ENCODE measurements at regions of chr1 and their contacts with region 1.

Region 1: DNA sequence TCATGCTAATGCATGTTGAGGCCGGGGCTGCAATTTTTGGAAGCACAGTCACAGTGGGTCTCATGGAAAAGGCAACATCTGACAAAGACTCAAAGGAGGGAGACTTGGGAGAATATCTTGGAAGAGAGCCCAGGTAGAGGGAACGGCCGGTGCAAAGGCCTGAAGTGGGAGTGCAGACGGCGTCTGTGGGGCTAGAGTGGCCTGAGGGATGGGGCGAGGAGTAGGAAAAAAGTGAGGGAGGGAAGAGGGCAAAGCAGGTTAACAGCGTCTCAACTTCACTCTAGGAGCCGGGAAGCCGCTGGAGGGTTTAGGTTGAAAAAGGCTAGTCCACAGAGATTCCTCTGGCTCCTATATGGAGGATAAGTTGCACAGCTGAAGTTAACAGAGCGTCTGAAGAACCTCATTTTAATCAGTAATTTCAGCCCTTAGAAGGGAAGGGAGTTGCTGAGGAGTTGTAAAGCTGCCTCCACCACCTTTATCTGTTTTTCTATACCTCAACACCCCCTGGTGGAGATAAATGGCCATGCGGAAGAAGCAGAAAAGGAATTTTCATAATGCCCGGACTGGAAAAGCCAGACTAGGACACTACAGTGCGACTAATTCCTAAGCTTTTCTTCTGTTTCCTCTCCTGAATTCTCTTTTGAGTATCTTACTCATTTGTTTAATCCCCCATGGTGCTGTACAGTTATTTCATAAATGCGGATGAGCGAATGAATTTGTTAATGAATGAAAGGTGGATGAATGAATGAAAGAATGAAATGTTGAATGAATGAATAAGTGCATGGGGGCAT is 78.7 kb upstream of the ZNF281 start:
- DNase-seq: peak; percentile 72
- H3K4me3 ChIP-seq: no peak overlapping the region
- H3K27ac ChIP-seq: no peak overlapping the region
- H3K4me1 ChIP-seq: peaks cover 10% of the 10 kb centered on the region
- H3K27me3 ChIP-seq: peaks cover 0 to 2% of the 10 kb centered on the region in 2 experiments
- CTCF ChIP-seq: peak; percentile 71 to 73
- POLR2A ChIP-seq: no peak

Region 2: GRCh38 chr1:199639453-199639852 is 849.1 kb before region 1 on chr1:
- CTCF ChIA-PET with region 1: no interaction called
- POLR2A ChIA-PET with region 1: no interaction called
- dilution Hi-C with region 1: no loop called
- intact Hi-C with region 1: no loop called
- DNase-seq: no peak
- H3K4me3 ChIP-seq: no peak overlapping the region
- H3K27ac ChIP-seq: no peak overlapping the region
- H3K4me1 ChIP-seq: no peaks in the 10 kb centered on the region
- H3K27me3 ChIP-seq: peaks cover 0 to 2% of the 10 kb centered on the region in 2 experiments
- CTCF ChIP-seq: no peak
- POLR2A ChIP-seq: no peak

Region 3: GRCh38 chr1:200139661-200140250 is 348.8 kb before region 1 on chr1:
- CTCF ChIA-PET with region 1: interaction called, 6 read pairs
- POLR2A ChIA-PET with region 1: no interaction called
- dilution Hi-C with region 1: no loop called
- intact Hi-C with region 1: loop called (anchors 1 kb)
- DNase-seq: peak; percentile 67
- H3K4me3 ChIP-seq: no peak overlapping the region
- H3K27ac ChIP-seq: no peak overlapping the region
- H3K4me1 ChIP-seq: no peaks in the 10 kb centered on the region
- H3K27me3 ChIP-seq: no peaks in the 10 kb centered on the region
- CTCF ChIP-seq: peak; percentile 64 to 65
- POLR2A ChIP-seq: no peak

Region 4: GRCh38 chr1:200207711-200208126 is 280.9 kb before region 1 on chr1:
- CTCF ChIA-PET with region 1: no interaction called
- POLR2A ChIA-PET with region 1: no interaction called
- dilution Hi-C with region 1: no loop called
- intact Hi-C with region 1: no loop called
- DNase-seq: no peak
- H3K4me3 ChIP-seq: no peak overlapping the region
- H3K27ac ChIP-seq: no peak overlapping the region
- H3K4me1 ChIP-seq: no peaks in the 10 kb centered on the region
- H3K27me3 ChIP-seq: no peaks in the 10 kb centered on the region
- CTCF ChIP-seq: no peak
- POLR2A ChIP-seq: no peak

Region 5: DNA sequence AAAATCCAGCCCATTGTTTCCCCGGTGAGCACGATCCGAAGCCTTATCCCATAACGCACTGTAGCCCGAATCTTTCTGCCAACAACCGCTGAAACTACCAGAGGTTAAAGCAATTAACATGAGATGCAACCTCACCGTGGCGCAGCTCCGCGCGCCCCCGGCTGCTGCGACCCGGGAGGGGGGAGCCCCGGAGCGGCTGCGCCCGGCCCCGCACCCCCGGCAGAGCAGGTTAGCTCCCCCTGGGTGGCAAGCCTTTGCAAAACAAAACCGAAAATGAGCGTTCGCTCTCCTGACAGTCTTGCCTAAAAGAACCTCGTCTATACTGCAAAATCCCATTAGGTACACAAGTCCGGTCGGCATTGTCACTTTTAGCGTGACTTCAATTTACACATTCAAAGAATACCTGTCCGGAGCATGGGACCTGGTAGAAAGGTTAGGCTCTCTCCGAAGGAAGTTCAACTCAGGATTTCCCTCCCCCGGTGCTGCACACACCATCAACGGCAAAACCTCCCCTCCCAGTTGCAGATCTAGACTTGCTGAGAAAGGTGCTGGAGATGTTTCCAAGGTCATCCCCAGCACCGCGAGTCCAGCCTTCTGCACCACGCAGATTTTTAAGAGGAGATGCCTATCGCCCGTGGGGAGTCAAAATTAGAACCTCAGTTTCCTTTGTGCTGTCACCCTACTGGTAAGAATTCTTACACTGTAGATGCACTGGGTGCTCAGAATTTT is 186.2 kb before region 1 on chr1:
- CTCF ChIA-PET with region 1: interaction called, 17 read pairs
- POLR2A ChIA-PET with region 1: no interaction called
- dilution Hi-C with region 1: no loop called
- intact Hi-C with region 1: loop called (anchors 1 kb)
- DNase-seq: peak; percentile 44
- H3K4me3 ChIP-seq: peak overlapping the region; percentile 63 to 85 (median 81)
- H3K27ac ChIP-seq: no peak overlapping the region
- H3K4me1 ChIP-seq: peaks cover 2% of the 10 kb centered on the region
- H3K27me3 ChIP-seq: peaks cover 5 to 7% of the 10 kb centered on the region in 2 experiments
- CTCF ChIP-seq: no peak
- POLR2A ChIP-seq: no peak

Region 6: GRCh38 chr1:200409761-200410565 is 78.6 kb before region 1 on chr1 and contains the start of gene ZNF281:
- CTCF ChIA-PET with region 1: interaction called, 7 read pairs
- POLR2A ChIA-PET with region 1: interaction called, 5 read pairs
- dilution Hi-C with region 1: no loop called
- intact Hi-C with region 1: loop called (anchors 1 kb)
- DNase-seq: peak; percentile 95
- H3K4me3 ChIP-seq: peak within 1 kb of the TSS; percentile 87 to 98 (median 95)
- H3K27ac ChIP-seq: peak within 1 kb of the TSS; percentile 86
- H3K4me1 ChIP-seq: peaks cover 39% of the 10 kb centered on the region
- H3K27me3 ChIP-seq: no peaks in the 10 kb centered on the region
- CTCF ChIP-seq: no peak
- POLR2A ChIP-seq: peak; percentile 68
- total RNA-seq, gene ZNF281: 22.3 and 23.2 TPM in 2 replicates

Region 7: DNA sequence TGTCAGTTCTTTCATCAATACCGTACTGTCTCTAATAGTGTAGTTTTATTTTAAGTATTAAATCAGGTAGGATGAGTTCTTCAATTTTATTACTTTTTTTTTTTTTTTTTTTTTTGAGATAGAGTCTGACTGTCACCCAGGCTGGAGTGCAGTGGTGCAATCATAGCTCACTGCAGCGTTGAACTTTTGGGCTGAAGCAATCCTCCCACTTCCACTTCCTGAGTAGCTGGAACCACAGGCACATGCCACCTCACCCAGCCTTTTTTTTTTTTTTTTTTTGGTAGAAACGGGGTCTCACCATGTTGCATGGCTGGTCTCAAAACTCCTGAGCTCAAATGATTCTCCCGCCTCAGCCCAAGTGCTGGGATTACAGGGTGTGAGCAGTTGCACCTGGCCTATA is 450.4 kb after region 1 on chr1:
- CTCF ChIA-PET with region 1: no interaction called
- POLR2A ChIA-PET with region 1: no interaction called
- dilution Hi-C with region 1: no loop called
- intact Hi-C with region 1: no loop called
- DNase-seq: no peak
- H3K4me3 ChIP-seq: no peak overlapping the region
- H3K27ac ChIP-seq: no peak overlapping the region
- H3K4me1 ChIP-seq: no peaks in the 10 kb centered on the region
- H3K27me3 ChIP-seq: peaks cover 0 to 4% of the 10 kb centered on the region in 2 experiments
- CTCF ChIP-seq: no peak
- POLR2A ChIP-seq: no peak